GM10248 (cell line): ENCODE measurements at regions of chr14 and their contacts with region 1.

Region 1: DNA sequence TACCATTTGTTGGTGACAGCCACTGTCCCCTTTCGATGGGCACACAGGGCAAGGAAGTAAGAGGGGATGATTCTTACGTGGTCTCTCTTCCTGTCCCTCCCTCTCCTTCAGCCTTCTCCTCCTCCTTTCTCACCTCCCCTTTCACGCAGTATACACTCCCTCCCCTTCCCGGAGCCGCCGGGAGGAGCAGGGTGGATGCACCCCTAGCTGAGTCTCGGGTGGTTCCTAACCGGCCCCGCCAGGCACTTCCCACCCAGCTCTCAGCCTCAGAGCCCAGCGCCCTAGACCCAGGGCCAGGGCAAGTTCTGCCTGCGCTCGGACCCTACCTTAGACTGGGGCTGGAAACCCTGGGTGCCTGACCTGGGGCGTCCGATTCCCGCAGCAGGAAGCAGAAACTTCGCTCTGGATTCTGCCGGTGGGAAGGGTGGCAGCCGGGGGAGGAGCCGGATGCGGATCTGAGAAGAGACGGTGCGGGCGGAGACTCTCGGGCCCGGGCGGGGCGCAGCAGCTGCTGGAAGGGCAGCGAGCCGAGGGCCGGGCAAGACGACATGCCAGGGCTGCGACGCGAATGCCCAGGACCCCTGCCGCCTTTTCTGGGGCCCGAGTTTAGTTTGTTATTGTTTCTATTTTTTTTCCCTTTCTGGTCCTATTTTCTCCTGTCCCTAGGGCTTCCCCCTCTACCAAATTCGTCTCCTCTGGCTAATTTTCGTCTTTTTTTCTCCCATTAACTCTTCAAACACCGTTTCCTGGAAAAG is at the start of gene TEP1:
- DNase-seq: peak; percentile 80
- CTCF ChIP-seq: no peak

Region 2: GRCh38 chr14:20343092-20343861 is 69.9 kb before region 1 on chr14 and contains the start of gene PARP2:
- CTCF ChIA-PET with region 1: interaction called, 11 read pairs
- POLR2A ChIA-PET with region 1: interaction called, 11 read pairs
- DNase-seq: peak; percentile 93
- CTCF ChIP-seq: no peak

Region 3: DNA sequence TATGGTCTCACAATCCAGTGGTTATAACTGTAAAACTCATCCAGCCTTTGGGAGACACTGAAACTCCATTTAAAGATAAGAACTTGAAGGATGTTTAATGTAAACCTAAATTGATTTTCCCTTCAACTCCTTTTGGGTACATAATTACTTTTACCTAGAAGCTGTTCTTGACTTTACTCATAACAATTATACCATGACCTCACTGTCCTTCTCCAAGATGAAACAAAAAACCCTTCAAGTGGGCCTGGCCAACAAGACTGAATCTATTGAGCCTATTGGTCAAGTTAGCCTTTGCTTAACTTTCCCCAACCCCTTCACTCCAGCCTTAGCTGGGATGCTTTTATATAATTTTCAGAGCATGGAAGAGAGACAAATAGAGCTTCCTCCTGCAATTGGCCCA is 47.3 kb before region 1 on chr14:
- CTCF ChIA-PET with region 1: no interaction called
- POLR2A ChIA-PET with region 1: no interaction called
- DNase-seq: no peak
- CTCF ChIP-seq: no peak

Region 4: DNA sequence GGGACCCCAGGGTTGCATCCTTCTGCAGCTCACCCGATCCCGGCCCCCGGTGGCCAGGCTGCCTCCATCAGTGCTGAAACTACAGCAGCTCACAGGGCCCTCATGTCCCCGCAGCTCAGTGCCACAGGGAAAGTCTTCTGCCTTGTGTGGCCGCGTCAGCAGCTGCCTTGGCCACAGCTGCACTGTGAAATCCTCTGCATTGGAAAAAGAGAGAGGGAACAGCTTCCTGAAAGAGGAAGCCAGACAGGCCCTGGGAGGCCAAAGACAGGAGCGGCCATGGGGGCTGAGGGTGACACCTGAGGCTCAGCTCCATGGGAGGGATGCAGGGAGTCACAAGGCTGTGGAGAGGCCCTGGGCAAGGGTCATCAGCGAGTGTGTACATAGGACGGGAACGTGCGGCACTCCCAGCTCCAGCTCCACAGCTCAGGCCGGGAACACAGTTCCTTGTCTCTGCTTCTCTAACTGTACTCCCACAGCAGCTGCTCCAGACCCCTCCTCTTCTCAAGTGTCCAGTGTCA is 37.1 kb before region 1 on chr14:
- CTCF ChIA-PET with region 1: interaction called, 18 read pairs
- POLR2A ChIA-PET with region 1: no interaction called
- DNase-seq: no peak
- CTCF ChIP-seq: no peak

Region 5: DNA sequence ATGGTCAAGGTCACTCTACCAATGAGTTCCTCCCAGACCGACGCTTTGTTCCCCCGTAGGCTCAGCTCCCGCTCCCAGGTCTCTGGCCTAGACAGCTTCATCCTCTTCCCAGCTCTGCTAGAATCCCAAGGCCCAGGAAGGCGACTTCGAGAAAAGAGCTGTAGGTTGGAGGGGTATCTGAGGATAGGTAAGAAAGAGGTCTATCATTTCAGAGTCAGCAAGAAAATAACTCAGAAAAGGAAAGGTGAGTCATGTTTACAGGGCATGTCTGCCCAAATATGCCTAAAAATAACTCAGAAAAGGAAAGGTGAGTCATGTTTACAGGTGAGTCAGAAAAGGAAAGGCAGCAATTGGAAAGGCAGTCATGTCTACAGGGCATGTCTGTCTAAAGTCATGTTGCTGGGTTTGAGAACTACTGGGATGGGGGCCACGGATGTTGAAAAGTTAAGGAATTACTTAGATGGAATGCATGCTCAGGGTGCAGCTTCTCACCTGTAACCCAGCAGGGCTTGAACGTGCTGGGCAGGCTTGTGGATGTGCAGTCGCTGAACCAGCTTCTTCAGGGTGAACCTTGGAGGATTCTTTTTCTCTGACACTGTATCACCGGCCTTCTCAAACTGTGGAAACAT is 12.1 kb before region 1 on chr14:
- CTCF ChIA-PET with region 1: interaction called, 49 read pairs
- POLR2A ChIA-PET with region 1: no interaction called
- DNase-seq: no peak
- CTCF ChIP-seq: no peak

Region 6: GRCh38 chr14:20434701-20435581 is 21.7 kb after region 1 on chr14:
- CTCF ChIA-PET with region 1: interaction called, 40 read pairs
- POLR2A ChIA-PET with region 1: no interaction called
- DNase-seq: no peak
- CTCF ChIP-seq: no peak

Region 7: GRCh38 chr14:20454516-20455354 is 41.5 kb after region 1 on chr14 and contains the starts of genes APEX1 and OSGEP:
- CTCF ChIA-PET with region 1: interaction called, 39 read pairs
- POLR2A ChIA-PET with region 1: interaction called, 5 read pairs
- DNase-seq: peak; percentile 96
- CTCF ChIP-seq: no peak

Region 8: GRCh38 chr14:20613094-20614037 is 200.1 kb after region 1 on chr14:
- CTCF ChIA-PET with region 1: interaction called, 15 read pairs
- POLR2A ChIA-PET with region 1: no interaction called
- DNase-seq: peak; percentile 74
- CTCF ChIP-seq: peak; percentile 68